Posterior vena cava (tissue), 2 donors: ENCODE measurements at regions of chr4 and their contacts with region 1.

Region 1: GRCh38 chr4:57945298-57945697 is 835.1 kb upstream of the IGFBP7 start:
- DNase-seq: no peak

Region 2: GRCh38 chr4:57763070-57763612 is 182.2 kb before region 1 on chr4:
- intact Hi-C with region 1: no loop called
- DNase-seq: no peak

Region 3: DNA sequence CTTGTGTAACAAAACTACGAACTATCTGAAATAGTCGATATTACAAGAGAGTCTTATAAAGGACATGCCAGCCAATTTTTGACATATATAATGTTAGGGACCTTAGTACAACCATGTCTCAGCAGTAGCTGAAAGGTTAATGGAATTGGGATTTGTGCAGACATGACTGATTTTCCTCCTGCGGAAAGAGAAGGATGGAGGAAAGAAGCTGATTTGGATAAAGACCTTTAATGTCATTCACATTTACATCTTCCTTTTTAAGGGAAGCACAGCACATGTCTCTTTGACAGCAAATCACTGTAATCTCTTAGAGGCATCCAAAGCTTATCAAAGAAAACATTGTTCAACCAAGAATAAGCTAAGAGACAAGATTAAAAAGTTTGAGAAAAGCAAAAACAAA is 1141.1 kb after region 1 on chr4:
- intact Hi-C with region 1: loop called in 1 of 2 experiments (anchors 5 kb)
- DNase-seq: no peak